A549 (cell line): ENCODE measurements at regions of chr12 and their contacts with region 1.

Region 1: GRCh38 chr12:116130431-116130830 is 147.1 kb downstream of the MED13L start:
- DNase-seq: no peak
- ATAC-seq: no peak; a peak in 1 of 6 replicates
- H3K4me3 ChIP-seq: no peak overlapping the region
- H3K27ac ChIP-seq: no peak overlapping the region
- H3K4me1 ChIP-seq: peaks cover 81% of the 10 kb centered on the region
- CTCF ChIP-seq: no peak
- EP300 ChIP-seq: no peak
- POLR2A ChIP-seq: no peak
- RAD21 ChIP-seq: no peak

Region 2: GRCh38 chr12:116142936-116143898 is 12.8 kb after region 1 on chr12:
- CTCF ChIA-PET with region 1: interaction called, 11 read pairs
- POLR2A ChIA-PET with region 1: no interaction called
- DNase-seq: peak in 1 of 2 experiments; percentile 33
- ATAC-seq: peak in 1 of 2 experiments; percentile 50; a peak in 3 of 6 replicates
- H3K4me3 ChIP-seq: no peak overlapping the region
- H3K27ac ChIP-seq: peak overlapping the region; percentile 7 to 61; a peak in 4 of 6 replicates
- H3K4me1 ChIP-seq: peaks cover 68% of the 10 kb centered on the region
- CTCF ChIP-seq: no peak
- EP300 ChIP-seq: no peak
- POLR2A ChIP-seq: no peak
- RAD21 ChIP-seq: no peak

Region 3: DNA sequence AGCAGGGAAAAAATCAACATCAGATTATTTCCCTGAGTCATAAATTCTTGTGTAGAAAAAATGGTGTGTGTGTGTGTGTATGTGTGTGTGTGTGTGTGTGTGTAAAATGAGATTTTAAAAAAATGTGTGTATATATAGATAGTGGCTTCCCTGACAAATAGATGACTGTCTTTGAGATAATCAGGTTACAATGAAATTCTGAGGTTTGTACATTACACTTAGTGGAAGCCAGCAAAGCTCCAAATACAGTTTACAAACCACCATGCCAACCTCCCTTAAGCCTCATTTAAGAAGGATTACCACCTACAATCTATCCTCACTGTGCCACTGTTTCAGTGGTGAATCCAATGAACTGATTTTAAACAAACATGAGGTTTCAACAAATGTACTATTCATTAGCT is 53.3 kb after region 1 on chr12:
- CTCF ChIA-PET with region 1: no interaction called
- POLR2A ChIA-PET with region 1: no interaction called
- DNase-seq: no peak
- ATAC-seq: no peak
- H3K4me3 ChIP-seq: no peak overlapping the region
- H3K27ac ChIP-seq: no peak overlapping the region
- H3K4me1 ChIP-seq: peaks cover 58% of the 10 kb centered on the region
- CTCF ChIP-seq: no peak
- EP300 ChIP-seq: no peak
- POLR2A ChIP-seq: no peak
- RAD21 ChIP-seq: no peak